AG04449 (cell line): ENCODE measurements at regions of chr11 and their contacts with region 1.

Region 1: GRCh38 chr11:11813288-11813962 is 28.3 kb upstream of the USP47 start:
- DNase-seq: peak; percentile 90
- H3K4me3 ChIP-seq: no peak overlapping the region
- CTCF ChIP-seq: no peak

Region 2: GRCh38 chr11:11621573-11622319 is 191.7 kb before region 1 on chr11 and contains the start of gene GALNT18:
- CTCF ChIA-PET with region 1: no interaction called
- POLR2A ChIA-PET with region 1: no interaction called
- DNase-seq: peak; percentile 36
- H3K4me3 ChIP-seq: peak within 1 kb of the TSS; percentile 54
- CTCF ChIP-seq: peak; percentile 62

Region 3: GRCh38 chr11:11757909-11758308 is 55.5 kb before region 1 on chr11:
- CTCF ChIA-PET with region 1: no interaction called
- POLR2A ChIA-PET with region 1: no interaction called
- DNase-seq: no peak
- H3K4me3 ChIP-seq: no peak overlapping the region
- CTCF ChIP-seq: no peak

Region 4: DNA sequence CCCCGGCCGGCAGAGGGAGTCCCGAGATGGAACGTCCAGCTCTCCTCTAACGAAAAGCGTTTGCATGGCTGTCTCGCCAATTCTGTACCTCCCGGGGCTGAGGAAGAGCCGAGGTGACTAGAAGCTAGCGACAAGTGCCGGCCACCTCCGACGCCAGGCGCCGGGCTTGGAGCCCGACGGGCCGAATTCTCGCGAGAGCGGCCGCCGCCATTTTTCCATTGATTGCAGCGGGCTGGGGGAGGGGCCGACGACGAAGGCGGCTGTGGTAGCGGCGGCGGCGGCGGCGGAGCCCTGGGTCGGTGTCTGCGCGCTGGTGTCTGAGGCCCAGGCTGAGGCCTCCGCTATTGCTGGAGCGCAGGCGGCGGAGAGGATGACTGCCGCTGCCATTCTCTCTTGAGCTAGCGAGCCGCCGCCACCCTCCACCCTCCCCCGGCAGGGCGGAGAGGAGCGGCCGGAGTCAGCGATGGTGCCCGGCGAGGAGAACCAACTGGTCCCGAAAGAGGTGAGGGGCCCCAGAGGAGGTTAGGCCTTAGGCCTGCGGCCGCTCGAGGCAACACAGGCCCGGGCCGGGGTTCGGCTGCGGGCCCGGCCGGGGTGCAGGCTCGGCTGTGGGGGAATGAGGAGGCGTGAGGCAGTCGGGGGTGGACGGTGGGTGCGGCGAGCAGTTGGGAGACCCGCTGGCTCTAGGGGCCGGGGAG is 28.4 kb after region 1 on chr11 and contains the start of gene USP47:
- CTCF ChIA-PET with region 1: interaction called, 6 read pairs
- POLR2A ChIA-PET with region 1: interaction called, 18 read pairs
- DNase-seq: no peak
- H3K4me3 ChIP-seq: peak within 1 kb of the TSS; percentile 79
- CTCF ChIP-seq: peak; percentile 70